ENCODE measurements at regions of chr3 and their contacts with region 1.

Region 1: GRCh38 chr3:195259475-195260279 is 11.3 kb downstream of the XXYLT1 start:
- DNase-seq: peak; percentile 85 to 96
- H3K4me3 ChIP-seq: peak overlapping the region; percentile 64 to 76 (median 71)
- H3K27ac ChIP-seq: peak overlapping the region; percentile 88 to 95 (median 91)
- H3K4me1 ChIP-seq: peaks cover 28 to 58% (median 41%) of the 10 kb centered on the region in 4 donors
- H3K27me3 ChIP-seq: no peaks in the 10 kb centered on the region
- CTCF ChIP-seq: peak in 4 of 7 experiments; percentile 22 to 100 (median 68)
- EP300 ChIP-seq: no peak
- POLR2A ChIP-seq: no peak

Region 2: GRCh38 chr3:195117978-195118581 is 141.6 kb before region 1 on chr3:
- intact Hi-C with region 1: loop called (anchors 10 kb)
- DNase-seq: peak; percentile 80 to 82
- H3K4me3 ChIP-seq: no peak overlapping the region
- H3K27ac ChIP-seq: peak overlapping the region in 4 of 5 donors; percentile 31 to 73 (median 58)
- H3K4me1 ChIP-seq: peaks cover 5 to 32% (median 7%) of the 10 kb centered on the region in 4 donors
- H3K27me3 ChIP-seq: no peaks in the 10 kb centered on the region
- CTCF ChIP-seq: no peak
- EP300 ChIP-seq: no peak
- POLR2A ChIP-seq: no peak